HEK293 (cell line): ENCODE measurements at regions of chr1 and their contacts with region 1.

Region 1: GRCh38 chr1:152533327-152533938 is 19.2 kb downstream of the CRCT1 start:
- H3K4me3 ChIP-seq: no peak overlapping the region
- H3K27ac ChIP-seq: no peak overlapping the region
- H3K4me1 ChIP-seq: no peaks in the 10 kb centered on the region
- CTCF ChIP-seq: peak; percentile 48; the same call in 1 of the 2 replicates

Region 2: DNA sequence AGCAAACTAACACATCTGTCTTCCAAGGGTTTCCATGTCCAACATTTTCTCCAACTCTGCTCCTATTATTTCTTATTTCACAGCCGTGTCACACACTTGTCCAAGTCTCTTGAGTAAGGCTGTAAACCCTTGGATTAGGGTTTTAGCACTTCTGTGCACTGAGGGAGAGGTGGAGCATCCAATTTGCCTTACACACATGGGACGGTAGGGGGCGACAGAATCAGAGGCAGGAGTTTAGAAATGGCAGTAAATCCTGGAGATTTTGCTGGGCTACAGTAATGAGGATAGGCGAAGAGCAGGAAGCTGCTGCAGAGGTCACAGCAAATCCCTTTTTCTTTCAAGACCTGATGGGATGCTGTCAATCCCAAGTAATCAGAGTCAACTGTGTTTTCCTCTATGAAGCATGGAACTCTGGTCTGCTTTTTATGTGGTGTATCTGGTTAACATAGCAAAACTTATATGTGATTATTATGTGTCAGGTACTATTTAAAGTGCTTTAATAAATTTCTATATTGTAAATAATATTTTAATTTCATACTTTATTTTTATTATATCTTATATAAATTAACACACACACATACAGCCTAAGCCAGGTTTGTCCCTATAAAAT is 38.3 kb before region 1 on chr1:
- CTCF ChIA-PET with region 1: interaction called, 14 read pairs
- POLR2A ChIA-PET with region 1: no interaction called
- H3K4me3 ChIP-seq: no peak overlapping the region
- H3K27ac ChIP-seq: no peak overlapping the region
- H3K4me1 ChIP-seq: no peaks in the 10 kb centered on the region
- CTCF ChIP-seq: no peak